Upper lobe of right lung (tissue), 1 donor: ENCODE measurements at regions of chr10 and their contacts with region 1.

Region 1: DNA sequence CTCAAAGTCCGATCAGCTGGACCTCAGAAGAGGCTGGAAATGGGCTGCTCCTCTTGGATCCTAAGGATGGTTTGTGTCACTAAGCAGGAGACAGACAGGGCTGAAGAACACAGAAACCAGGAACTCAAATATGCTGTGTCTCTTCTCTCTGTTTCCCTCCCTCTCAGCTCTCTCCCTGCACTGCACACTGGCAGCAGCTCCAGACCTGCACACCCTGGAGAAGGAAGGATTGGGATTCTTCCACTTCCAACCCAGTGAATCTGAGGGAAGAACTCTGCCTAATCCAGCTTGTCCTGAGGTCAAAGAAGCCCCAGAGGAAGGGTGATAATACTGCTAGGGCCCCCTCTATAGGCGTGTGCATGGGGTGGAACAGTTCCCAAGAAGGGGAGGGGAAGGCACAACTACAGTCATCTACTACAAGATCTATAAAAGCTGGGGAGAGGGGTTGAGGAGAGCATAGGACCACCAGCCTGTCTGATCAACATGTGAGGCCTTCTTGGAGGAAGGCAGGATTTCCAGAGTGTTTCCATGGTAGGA is 22.7 kb upstream of the ZCCHC24 start:
- DNase-seq: no peak
- ATAC-seq: peak; percentile 49
- H3K4me3 ChIP-seq: no peak overlapping the region
- H3K27ac ChIP-seq: peak overlapping the region; percentile 65
- H3K4me1 ChIP-seq: peaks cover 13% of the 10 kb centered on the region
- H3K27me3 ChIP-seq: no peaks in the 10 kb centered on the region
- CTCF ChIP-seq: no peak

Region 2: GRCh38 chr10:79374312-79375191 is 93.5 kb before region 1 on chr10:
- intact Hi-C with region 1: loop called (anchors 5 kb)
- DNase-seq: peak; percentile 90
- ATAC-seq: peak; percentile 90
- H3K4me3 ChIP-seq: no peak overlapping the region
- H3K27ac ChIP-seq: no peak overlapping the region
- H3K4me1 ChIP-seq: peaks cover 7% of the 10 kb centered on the region
- H3K27me3 ChIP-seq: no peaks in the 10 kb centered on the region
- CTCF ChIP-seq: peak; percentile 99